ENCODE measurements at regions of chr13 and their contacts with region 1.

Region 1: DNA sequence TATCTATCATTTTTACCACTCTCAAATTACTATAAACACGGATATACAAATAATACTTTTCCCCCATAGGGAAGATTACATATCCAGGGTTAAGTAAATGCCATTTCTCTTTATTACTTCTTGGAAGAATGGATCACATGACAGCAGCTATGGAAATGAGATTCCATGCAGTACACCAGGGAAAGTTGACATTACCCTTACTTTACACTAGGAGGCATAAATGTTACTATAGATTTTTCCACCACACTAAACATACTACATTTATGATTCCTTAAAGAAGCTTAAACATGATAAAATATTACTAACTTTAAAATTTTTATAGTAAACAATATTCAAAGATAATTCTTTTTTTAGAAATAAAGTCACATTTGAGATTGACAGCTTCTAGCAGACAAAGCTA is 611.4 kb downstream of the PCDH9 start:
- DNase-seq: peak; percentile 11
- H3K4me3 ChIP-seq: no peak overlapping the region
- H3K27ac ChIP-seq: no peak overlapping the region
- H3K27me3 ChIP-seq: no peaks in the 10 kb centered on the region
- CTCF ChIP-seq: peak; percentile 69

Region 2: GRCh38 chr13:66635526-66635925 is 16.8 kb after region 1 on chr13:
- CTCF ChIA-PET with region 1: interaction called, 28 read pairs
- POLR2A ChIA-PET with region 1: no interaction called
- DNase-seq: peak; percentile 68
- H3K4me3 ChIP-seq: no peak overlapping the region
- H3K27ac ChIP-seq: peak overlapping the region; percentile 55
- H3K27me3 ChIP-seq: no peaks in the 10 kb centered on the region
- CTCF ChIP-seq: no peak

Region 3: GRCh38 chr13:66689628-66690027 is 70.9 kb after region 1 on chr13:
- CTCF ChIA-PET with region 1: interaction called, 15 read pairs
- POLR2A ChIA-PET with region 1: no interaction called
- DNase-seq: no peak
- H3K4me3 ChIP-seq: no peak overlapping the region
- H3K27ac ChIP-seq: no peak overlapping the region
- H3K27me3 ChIP-seq: no peaks in the 10 kb centered on the region
- CTCF ChIP-seq: peak; percentile 47

Region 4: DNA sequence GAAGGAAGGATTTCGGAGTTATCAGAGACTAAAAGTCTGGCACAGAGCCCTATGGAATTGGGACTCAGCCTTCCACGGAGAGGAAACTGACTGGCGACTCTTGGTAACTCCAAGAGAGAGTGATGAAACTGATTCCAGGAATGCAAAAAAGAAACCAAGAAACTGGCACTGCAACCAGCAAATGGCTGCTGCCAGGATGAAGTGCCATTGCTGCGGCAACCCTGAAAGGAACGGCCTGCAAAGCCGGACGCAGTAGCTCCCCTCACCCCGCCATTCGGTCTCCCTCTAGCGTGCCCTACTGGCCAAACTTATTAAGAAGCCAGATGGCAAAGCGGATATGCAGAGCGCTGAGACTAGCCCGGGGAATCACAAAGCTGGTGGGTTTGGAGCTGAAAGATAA is 375.4 kb after region 1 on chr13:
- CTCF ChIA-PET with region 1: interaction called, 11 read pairs
- POLR2A ChIA-PET with region 1: no interaction called
- DNase-seq: no peak
- H3K4me3 ChIP-seq: peak overlapping the region; percentile 33
- H3K27ac ChIP-seq: no peak overlapping the region
- H3K27me3 ChIP-seq: no peaks in the 10 kb centered on the region
- CTCF ChIP-seq: peak; percentile 81

Region 5: GRCh38 chr13:67186995-67187569 is 568.4 kb after region 1 on chr13:
- CTCF ChIA-PET with region 1: no interaction called
- POLR2A ChIA-PET with region 1: no interaction called
- DNase-seq: no peak
- H3K4me3 ChIP-seq: no peak overlapping the region
- H3K27ac ChIP-seq: no peak overlapping the region
- H3K27me3 ChIP-seq: no peaks in the 10 kb centered on the region
- CTCF ChIP-seq: no peak

Region 6: DNA sequence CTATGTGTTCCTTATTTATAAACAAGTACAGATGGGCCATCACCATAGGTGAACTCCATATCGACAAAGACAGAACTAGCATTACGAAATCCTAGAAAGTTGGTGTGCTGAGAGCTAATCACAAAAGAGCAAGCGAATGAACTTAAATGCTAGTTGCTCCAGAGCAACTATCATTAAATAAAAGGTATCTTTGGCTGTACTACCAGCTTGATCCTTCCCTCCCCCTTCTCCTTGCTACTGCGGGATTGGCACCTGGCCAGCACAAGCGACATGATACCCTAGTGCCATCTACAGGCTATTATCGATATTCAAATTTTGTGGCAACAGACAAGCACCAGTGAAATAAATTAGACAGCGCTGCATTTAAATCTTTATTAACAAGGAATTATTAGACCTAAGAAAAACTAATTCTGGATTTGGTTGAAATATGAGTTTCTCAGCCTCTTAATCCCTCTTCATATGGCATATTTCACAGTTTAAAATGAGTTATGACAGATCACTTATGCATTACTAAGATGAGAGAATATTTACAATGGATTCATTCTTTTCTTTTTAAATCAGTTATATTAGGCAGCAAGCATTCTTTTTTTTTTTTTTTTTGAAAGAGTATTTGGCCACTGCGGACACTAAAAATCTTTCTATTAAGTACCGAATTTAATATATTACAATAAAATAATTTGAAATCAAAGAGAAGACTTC is 605.6 kb after region 1 on chr13:
- CTCF ChIA-PET with region 1: interaction called, 12 read pairs
- POLR2A ChIA-PET with region 1: no interaction called
- DNase-seq: peak; percentile 68
- H3K4me3 ChIP-seq: peak overlapping the region; percentile 27; the same call in 1 of the 2 replicates
- H3K27ac ChIP-seq: no peak overlapping the region
- H3K27me3 ChIP-seq: no peaks in the 10 kb centered on the region
- CTCF ChIP-seq: peak; percentile 72

Region 7: GRCh38 chr13:67230404-67231288 is 611.9 kb after region 1 on chr13:
- CTCF ChIA-PET with region 1: interaction called, 10 read pairs
- POLR2A ChIA-PET with region 1: no interaction called
- DNase-seq: peak; percentile 92
- H3K4me3 ChIP-seq: peak overlapping the region; percentile 89
- H3K27ac ChIP-seq: peak overlapping the region; percentile 81
- H3K27me3 ChIP-seq: no peaks in the 10 kb centered on the region
- CTCF ChIP-seq: no peak

Region 8: DNA sequence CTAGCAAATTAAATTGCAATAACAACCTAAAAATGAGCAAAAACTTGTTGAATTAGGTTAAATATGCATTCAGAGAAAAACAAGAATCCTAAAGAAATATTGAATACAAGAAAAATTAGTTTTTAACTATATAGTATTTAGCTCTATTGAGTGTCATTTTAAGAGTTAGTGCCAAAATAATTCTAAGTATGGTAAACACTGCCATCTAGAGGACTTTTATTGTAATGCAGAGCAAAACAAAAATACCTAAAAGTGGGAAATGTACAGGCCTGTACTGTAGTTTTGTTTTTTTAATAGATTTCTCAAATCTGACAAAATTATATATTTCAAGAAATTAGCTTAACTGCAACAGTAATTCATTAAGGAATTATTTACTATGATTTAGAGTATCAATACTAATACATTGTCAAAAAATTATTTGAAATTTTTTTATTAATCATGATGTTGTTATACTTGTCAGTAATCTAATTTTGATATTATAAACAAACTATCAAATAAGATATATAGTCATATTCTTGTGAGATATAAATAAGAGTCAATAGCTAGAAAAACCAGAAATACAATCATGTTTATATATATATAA is 619.7 kb after region 1 on chr13:
- CTCF ChIA-PET with region 1: interaction called, 13 read pairs
- POLR2A ChIA-PET with region 1: no interaction called
- DNase-seq: no peak
- H3K4me3 ChIP-seq: no peak overlapping the region
- H3K27ac ChIP-seq: no peak overlapping the region
- H3K27me3 ChIP-seq: no peaks in the 10 kb centered on the region
- CTCF ChIP-seq: peak; percentile 64

Measured in AG04450 (cell line).